AG04449 (cell line): ENCODE measurements at regions of chr20 and their contacts with region 1.

Region 1: DNA sequence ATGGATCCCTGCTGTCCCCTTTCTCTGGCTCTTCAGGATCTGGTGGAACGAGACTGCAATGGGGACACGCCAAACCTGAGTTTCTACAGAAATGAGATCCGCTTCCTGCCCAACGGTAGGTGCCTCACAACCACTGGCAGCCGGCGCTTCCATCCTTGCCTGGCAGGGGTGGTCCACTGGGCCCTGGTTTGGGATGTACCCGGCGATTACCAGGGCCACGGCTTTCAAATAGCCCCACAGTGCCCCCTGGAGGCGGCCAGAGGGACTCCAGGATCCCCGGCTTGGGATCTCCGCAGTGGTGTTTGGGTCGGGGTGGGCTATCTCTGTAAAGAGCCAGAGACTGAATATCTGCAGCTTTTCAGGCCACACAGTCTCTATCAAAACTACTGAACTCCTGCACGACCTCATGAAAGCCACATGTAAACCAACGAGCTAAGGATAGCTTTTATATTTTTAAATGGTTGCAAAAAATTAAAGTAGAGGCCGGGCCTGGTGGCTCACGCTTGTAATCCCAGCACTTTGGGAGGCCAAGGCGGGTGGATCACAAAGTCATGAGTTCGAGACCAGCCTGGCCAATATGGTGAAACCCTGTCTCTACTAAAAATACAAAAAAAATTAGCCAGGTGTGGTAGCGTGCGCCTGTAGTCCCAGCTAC is 3.7 kb downstream of the OGFR start:
- DNase-seq: no peak
- H3K4me3 ChIP-seq: no peak overlapping the region
- CTCF ChIP-seq: peak; percentile 92

Region 2: GRCh38 chr20:62500237-62500864 is 308.0 kb before region 1 on chr20:
- CTCF ChIA-PET with region 1: interaction called, 14 read pairs
- POLR2A ChIA-PET with region 1: no interaction called
- DNase-seq: no peak
- H3K4me3 ChIP-seq: no peak overlapping the region
- CTCF ChIP-seq: peak; percentile 93

Region 3: GRCh38 chr20:62662422-62662821 is 145.9 kb before region 1 on chr20:
- CTCF ChIA-PET with region 1: interaction called, 99 read pairs
- POLR2A ChIA-PET with region 1: no interaction called
- DNase-seq: peak; percentile 28
- H3K4me3 ChIP-seq: no peak overlapping the region
- CTCF ChIP-seq: no peak

Region 4: DNA sequence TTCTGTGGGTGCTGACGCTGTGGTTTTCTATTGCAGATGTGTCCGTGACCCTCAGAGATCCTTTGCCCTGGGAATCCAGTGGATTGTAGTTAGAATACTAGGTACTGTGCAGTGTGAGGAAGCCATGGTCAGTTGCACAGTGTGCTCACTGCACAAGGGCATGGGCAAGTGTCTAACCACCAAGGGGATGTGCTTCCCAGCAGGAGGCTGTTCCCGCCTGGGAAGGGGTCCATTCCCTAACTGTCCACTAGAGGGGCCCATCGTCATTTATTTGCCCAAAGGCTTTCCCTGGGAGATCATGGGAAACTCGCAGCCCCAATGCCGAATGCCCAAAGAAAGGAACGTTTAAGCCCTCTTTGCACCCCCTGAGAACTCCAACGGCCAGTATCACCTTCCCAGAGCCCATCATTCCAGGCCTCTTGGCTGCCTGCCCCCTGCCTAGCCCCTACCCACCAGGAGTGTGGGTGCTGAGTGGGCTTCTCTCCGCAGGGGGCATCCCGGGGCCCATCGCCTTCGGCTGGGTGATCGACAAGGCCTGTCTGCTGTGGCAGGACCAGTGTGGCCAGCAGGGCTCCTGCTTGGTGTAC is 139.8 kb before region 1 on chr20:
- CTCF ChIA-PET with region 1: interaction called, 99 read pairs
- POLR2A ChIA-PET with region 1: no interaction called
- DNase-seq: no peak
- H3K4me3 ChIP-seq: no peak overlapping the region
- CTCF ChIP-seq: peak; percentile 85

Region 5: GRCh38 chr20:62675156-62675876 is 133.0 kb before region 1 on chr20:
- CTCF ChIA-PET with region 1: interaction called, 99 read pairs
- POLR2A ChIA-PET with region 1: no interaction called
- DNase-seq: no peak
- H3K4me3 ChIP-seq: no peak overlapping the region
- CTCF ChIP-seq: no peak

Region 6: GRCh38 chr20:62723351-62723750 is 85.0 kb before region 1 on chr20:
- CTCF ChIA-PET with region 1: no interaction called
- POLR2A ChIA-PET with region 1: no interaction called
- DNase-seq: no peak
- H3K4me3 ChIP-seq: no peak overlapping the region
- CTCF ChIP-seq: no peak

Region 7: GRCh38 chr20:62822788-62823651 is 14.7 kb after region 1 on chr20:
- CTCF ChIA-PET with region 1: interaction called, 43 read pairs
- POLR2A ChIA-PET with region 1: no interaction called
- DNase-seq: no peak
- H3K4me3 ChIP-seq: no peak overlapping the region
- CTCF ChIP-seq: peak; percentile 35

Region 8: DNA sequence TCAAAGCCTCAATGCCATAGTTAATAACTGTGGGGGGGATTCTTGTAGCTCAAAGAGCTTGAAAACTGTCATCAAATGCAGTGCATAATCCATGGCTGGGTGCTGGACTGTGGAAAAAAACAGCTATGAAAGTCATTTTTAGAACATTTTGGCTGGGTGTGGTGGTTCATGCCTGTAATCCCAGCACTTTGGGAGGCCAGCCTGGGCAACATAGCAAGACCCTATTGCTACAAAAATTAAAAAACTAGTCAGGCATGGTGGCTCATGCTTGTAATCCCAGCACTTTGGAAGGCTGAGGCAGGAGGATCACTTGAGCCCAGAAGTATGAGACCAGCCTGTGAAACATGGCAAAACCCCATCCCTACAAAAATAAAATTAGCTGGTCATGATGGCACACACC is 41.1 kb after region 1 on chr20:
- CTCF ChIA-PET with region 1: interaction called, 11 read pairs
- POLR2A ChIA-PET with region 1: no interaction called
- DNase-seq: no peak
- H3K4me3 ChIP-seq: no peak overlapping the region
- CTCF ChIP-seq: no peak

Region 9: DNA sequence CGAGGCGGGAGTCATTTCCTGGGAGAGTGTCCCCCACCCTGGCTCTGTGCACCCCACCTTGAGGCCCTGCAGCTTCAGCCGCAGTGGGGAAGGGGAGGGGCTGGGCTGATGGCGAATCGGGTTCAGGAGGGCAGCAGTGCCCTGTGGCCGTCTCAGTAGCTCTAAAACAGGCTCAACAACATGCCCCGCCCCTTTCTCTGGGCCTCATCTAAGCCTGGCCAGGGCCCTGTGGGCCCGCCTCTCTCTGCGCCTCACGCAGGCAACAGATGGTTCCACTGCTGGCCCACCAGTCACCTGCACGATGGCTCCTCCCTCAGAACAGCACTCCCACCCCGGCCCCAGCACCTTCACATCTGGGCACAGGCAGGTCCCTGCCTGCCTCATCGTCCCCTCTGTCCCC is 522.6 kb after region 1 on chr20:
- CTCF ChIA-PET with region 1: no interaction called
- POLR2A ChIA-PET with region 1: no interaction called
- DNase-seq: no peak
- H3K4me3 ChIP-seq: no peak overlapping the region
- CTCF ChIP-seq: no peak